A549 (cell line): ENCODE measurements at regions of chr7 and their contacts with region 1.

Region 1: GRCh38 chr7:6430271-6430940 is 17.3 kb downstream of the DAGLB start:
- DNase-seq: no peak
- ATAC-seq: peak; percentile 83 to 90
- H3K4me3 ChIP-seq: no peak overlapping the region
- H3K27ac ChIP-seq: peak overlapping the region in 1 of 2 experiments; percentile 52; a peak in 2 of 6 replicates
- H3K4me1 ChIP-seq: peaks cover 9% of the 10 kb centered on the region
- CTCF ChIP-seq: no peak
- EP300 ChIP-seq: no peak
- POLR2A ChIP-seq: no peak
- RAD21 ChIP-seq: no peak

Region 2: DNA sequence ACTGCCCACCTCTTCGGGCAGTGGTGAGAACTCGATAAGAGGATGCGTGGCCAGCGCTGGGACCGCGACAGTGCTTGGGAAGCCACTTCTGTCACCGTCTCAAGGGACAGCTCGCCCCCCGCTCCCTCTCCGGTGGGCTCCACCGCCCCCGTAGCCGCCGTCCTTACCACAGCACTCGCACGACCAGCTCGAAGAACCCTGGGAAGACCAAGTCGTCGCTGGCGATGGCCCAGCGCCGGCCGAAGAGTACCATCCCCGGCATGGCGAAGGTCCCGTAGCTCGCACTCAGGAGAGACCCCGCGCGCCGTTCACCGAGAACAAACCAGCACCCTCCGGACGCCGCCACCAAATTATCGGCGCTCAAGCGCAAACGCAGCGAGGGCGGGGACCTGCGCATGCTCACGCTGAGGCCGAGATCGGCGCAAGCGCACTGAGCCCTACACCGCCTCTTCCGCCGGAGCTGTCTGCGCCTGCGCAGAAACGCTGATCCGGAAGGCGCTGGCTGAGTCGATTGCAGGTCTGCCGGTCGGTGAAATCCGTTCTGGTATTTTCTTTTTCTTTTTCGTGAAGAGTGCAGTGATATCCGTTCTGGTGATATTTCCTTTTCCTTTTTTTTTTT is 17.3 kb after region 1 on chr7 and contains the start of gene DAGLB:
- CTCF ChIA-PET with region 1: interaction called, 9 read pairs
- POLR2A ChIA-PET with region 1: interaction called, 10 read pairs
- DNase-seq: peak; percentile 93 to 94
- ATAC-seq: peak; percentile 63 to 76
- H3K4me3 ChIP-seq: peak within 1 kb of the TSS; percentile 99
- H3K27ac ChIP-seq: peak within 1 kb of the TSS; percentile 92 to 97
- H3K4me1 ChIP-seq: peaks cover 48% of the 10 kb centered on the region
- CTCF ChIP-seq: no peak
- EP300 ChIP-seq: no peak
- POLR2A ChIP-seq: peak; percentile 84
- RAD21 ChIP-seq: no peak
- polyA plus RNA-seq, gene DAGLB: 19.3 and 19.7 TPM in 2 replicates